Naive thymus-derived CD4-positive, alpha-beta T cell (primary cell): ENCODE measurements at regions of chr15 and their contacts with region 1.

Region 1: GRCh38 chr15:83011271-83012075 is at the start of gene C15orf40:
- DNase-seq: peak; percentile 71 to 90 (median 80)
- ATAC-seq: peak; percentile 92
- H3K4me3 ChIP-seq: peak within 1 kb of the TSS; percentile 91
- H3K4me3 Mint-ChIP-seq: peak within 1 kb of the TSS; percentile 91 to 100 (median 96)
- H3K27ac ChIP-seq: peak within 1 kb of the TSS; percentile 77
- H3K27ac Mint-ChIP-seq: peak within 1 kb of the TSS; percentile 88 to 98 (median 92)
- H3K4me1 ChIP-seq: peaks cover 14 to 24% of the 10 kb centered on the region in 2 donors
- H3K4me1 Mint-ChIP-seq: peaks cover 43 to 70% (median 55%) of the 10 kb centered on the region in 7 donors
- H3K27me3 ChIP-seq: no peaks in the 10 kb centered on the region
- H3K27me3 Mint-ChIP-seq: no peaks in the 10 kb centered on the region
- total RNA-seq, gene C15orf40: 12.1 to 47.2 (median 28.9) TPM

Region 2: DNA sequence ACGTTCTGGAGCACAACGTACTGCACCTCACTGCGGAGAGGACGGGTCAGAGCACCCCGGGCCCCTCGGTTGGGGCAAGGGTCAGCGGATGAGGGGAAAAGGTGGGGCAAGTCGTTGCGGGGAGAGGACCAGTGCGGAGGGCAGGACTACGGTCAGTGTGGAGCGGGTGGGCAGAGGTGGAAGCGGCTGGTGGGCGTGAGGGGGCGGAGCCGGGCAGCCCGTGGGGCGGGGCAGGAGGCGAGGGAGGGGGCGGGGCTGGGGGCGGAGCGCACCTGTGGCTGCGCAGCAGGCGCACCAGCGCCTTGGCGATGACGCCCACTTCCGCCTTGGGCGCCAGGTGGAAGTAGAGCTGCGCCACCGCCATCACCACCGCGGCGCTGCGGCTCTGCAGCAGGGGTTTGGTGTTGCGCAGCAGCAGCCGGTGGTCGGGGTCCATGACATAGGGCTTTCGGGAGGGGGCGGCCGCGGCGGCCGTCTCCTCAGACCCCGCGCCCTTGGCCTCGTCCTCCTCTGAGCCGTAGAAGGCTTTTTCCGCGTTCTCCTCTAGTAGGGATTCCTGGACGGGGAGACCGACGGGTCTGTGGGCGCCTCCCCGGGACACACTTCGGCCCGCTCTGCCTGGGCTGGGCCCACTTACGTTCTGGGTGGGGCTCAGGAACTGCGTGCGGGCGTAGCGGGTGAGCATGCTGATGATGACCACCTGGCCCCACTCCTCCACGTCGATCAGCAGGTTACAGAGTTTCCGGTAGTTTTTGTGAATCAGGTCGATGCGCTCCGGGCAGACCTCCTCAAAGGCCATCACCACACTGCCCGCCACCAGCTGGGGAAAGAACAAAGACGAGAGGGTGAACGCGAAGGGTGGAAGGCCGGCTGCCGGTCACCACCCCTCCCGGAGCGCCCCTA is 331.0 kb before region 1 on chr15:
- CTCF ChIA-PET with region 1: no interaction called
- POLR2A ChIA-PET with region 1: interaction called, 3 read pairs
- intact Hi-C with region 1: loop called in 1 of 2 experiments (anchors 5 kb)
- DNase-seq: peak; percentile 47 to 88 (median 82)
- ATAC-seq: peak; percentile 98
- H3K4me3 ChIP-seq: peak overlapping the region; percentile 97
- H3K4me3 Mint-ChIP-seq: peak overlapping the region; percentile 82 to 96 (median 93)
- H3K27ac ChIP-seq: peak overlapping the region; percentile 83
- H3K27ac Mint-ChIP-seq: peak overlapping the region in 8 of 9 donors; percentile 91 to 97 (median 94)
- H3K4me1 ChIP-seq: peaks cover 9% of the 10 kb centered on the region in 2 donors
- H3K4me1 Mint-ChIP-seq: peaks cover 0 to 19% (median 14%) of the 10 kb centered on the region in 7 donors
- H3K27me3 ChIP-seq: no peaks in the 10 kb centered on the region
- H3K27me3 Mint-ChIP-seq: peaks cover 0 to 42% (median 0%) of the 10 kb centered on the region in 5 donors

Region 3: DNA sequence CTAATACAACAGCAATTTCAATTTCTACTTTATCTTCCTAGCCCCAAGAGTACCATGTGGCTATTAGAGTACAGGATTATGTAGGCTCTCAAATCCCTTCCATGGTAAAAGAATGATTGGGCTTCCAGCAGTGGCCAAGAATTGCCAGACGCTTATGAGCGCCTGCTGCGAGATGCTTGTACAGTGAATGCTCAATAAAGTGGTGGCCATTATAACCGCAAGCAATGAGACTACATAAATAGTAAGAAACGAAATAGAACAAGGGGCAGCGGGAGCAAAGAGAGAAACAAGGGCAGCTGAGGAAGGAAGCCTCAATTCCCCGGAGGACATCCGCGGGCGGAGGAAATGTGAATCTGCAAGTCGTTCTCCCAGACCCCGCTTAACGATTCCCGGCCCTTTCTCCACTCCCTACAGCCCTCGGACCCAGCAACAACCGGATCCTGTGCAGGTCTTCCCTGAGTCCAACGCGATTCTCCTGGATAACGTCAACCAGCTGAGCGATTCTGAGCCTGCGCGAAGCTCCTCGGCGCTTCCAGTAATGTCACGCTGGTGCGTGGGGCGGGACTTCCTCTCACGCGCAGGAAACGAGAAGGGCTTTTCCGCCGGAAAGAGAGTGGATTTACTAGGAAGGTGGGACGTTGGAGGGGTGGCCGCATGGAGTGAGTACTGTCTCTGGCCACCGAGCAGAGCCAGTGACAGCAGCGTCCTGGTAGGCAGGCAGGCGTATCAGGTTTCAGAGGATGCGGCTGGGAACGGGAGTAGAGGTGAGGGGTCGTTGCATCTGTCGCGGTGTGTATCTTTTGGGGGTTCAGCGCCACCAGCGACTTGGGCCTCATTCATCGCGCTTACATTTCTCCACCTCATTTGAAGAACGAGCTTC is 261.3 kb before region 1 on chr15:
- CTCF ChIA-PET with region 1: no interaction called
- POLR2A ChIA-PET with region 1: interaction called, 3 read pairs
- intact Hi-C with region 1: loop called in 1 of 2 experiments (anchors 2 kb)
- DNase-seq: peak; percentile 51 to 84 (median 70)
- ATAC-seq: peak; percentile 96
- H3K4me3 ChIP-seq: peak overlapping the region; percentile 88
- H3K4me3 Mint-ChIP-seq: peak overlapping the region; percentile 93 to 100 (median 98)
- H3K27ac ChIP-seq: peak overlapping the region; percentile 78
- H3K27ac Mint-ChIP-seq: peak overlapping the region; percentile 89 to 98 (median 95)
- H3K4me1 ChIP-seq: peaks cover 10 to 15% of the 10 kb centered on the region in 2 donors
- H3K4me1 Mint-ChIP-seq: peaks cover 26 to 69% (median 57%) of the 10 kb centered on the region in 7 donors
- H3K27me3 ChIP-seq: no peaks in the 10 kb centered on the region
- H3K27me3 Mint-ChIP-seq: no peaks in the 10 kb centered on the region

Region 4: DNA sequence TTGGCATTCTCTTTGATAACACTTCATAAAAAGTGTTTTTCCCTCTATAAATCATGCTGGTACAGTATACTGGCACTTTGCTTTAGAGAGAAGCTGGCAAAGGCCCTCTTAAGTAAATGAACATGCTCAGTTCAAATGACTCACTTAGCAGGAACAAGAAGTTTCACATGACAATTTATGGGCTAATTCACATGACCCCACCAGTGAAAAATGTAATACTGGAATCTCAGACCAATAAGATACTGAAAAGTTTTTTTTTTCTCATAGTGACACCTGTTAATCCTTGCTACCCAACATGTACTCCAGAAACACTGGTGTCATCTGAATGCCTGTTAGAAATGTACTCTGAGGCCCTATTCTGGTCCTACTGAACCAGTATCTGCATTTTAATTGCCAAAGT is 41.7 kb after region 1 on chr15:
- CTCF ChIA-PET with region 1: no interaction called
- POLR2A ChIA-PET with region 1: no interaction called
- intact Hi-C with region 1: no loop called
- DNase-seq: no peak
- ATAC-seq: peak; percentile 26
- H3K4me3 ChIP-seq: no peak overlapping the region
- H3K4me3 Mint-ChIP-seq: no peak overlapping the region
- H3K27ac ChIP-seq: no peak overlapping the region
- H3K27ac Mint-ChIP-seq: no peak overlapping the region
- H3K4me1 ChIP-seq: peaks cover 0 to 8% of the 10 kb centered on the region in 2 donors
- H3K4me1 Mint-ChIP-seq: peaks cover 9 to 28% (median 21%) of the 10 kb centered on the region in 7 donors
- H3K27me3 ChIP-seq: no peaks in the 10 kb centered on the region
- H3K27me3 Mint-ChIP-seq: no peaks in the 10 kb centered on the region

Region 5: DNA sequence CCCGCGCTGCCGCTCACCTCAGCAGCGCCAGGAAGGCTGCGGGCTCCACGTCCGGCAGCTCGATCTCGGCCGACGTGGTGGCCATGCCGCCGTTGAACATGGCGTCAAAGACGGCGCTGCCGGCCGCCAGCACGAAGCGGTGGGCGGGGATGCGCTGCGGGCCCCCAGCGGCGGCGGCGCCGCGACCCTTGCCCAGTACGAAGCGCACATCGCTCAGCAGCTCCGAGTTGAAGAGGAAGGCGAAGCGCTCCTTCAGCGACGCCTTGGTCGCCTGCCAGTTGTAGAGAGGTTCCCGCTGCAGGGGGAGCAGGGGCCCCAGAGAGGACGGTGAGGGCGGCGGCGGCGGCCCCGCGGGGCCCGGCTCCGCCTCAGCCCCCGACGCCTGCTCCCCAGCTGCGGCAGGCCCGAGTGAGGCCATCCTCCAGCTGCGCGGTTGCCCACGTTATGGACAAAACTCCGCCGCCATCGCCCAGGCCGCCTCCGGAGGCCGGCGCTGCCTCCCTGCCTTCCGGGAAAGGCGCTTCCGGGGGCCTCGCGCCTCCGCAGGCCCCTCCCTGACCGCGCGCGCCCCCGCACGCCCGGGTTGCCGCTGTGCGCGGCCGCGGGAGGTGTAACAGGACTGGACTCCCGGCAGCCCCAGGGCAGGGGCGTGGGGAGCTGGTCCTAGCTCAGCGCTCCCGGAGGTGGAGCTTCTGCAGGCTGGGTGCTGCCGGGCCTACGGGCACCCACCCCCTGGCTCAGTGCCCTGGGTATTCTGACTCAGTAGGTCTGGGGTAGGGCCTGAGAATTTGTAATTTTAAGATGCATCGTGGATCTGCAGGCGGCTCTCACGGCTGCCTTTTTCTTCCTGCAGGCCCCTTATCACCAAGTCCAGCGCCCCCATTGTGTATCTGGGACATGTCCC is 55.5 kb after region 1 on chr15 and contains the start of gene BTBD1:
- CTCF ChIA-PET with region 1: no interaction called
- POLR2A ChIA-PET with region 1: interaction called, 11 read pairs
- intact Hi-C with region 1: loop called (anchors 1 kb)
- DNase-seq: peak; percentile 67 to 93 (median 76)
- ATAC-seq: peak; percentile 88
- H3K4me3 ChIP-seq: peak within 1 kb of the TSS; percentile 87
- H3K4me3 Mint-ChIP-seq: peak within 1 kb of the TSS in 7 of 10 donors; percentile 67 to 89 (median 83)
- H3K27ac ChIP-seq: peak within 1 kb of the TSS; percentile 84
- H3K27ac Mint-ChIP-seq: peak within 1 kb of the TSS; percentile 60 to 91 (median 87)
- H3K4me1 ChIP-seq: peaks cover 32 to 35% of the 10 kb centered on the region in 2 donors
- H3K4me1 Mint-ChIP-seq: peaks cover 8 to 18% (median 11%) of the 10 kb centered on the region in 7 donors
- H3K27me3 ChIP-seq: no peaks in the 10 kb centered on the region
- H3K27me3 Mint-ChIP-seq: peaks cover 0 to 1% (median 0%) of the 10 kb centered on the region in 5 donors
- total RNA-seq, gene BTBD1: 35.0 to 57.6 (median 36.4) TPM

Region 6: DNA sequence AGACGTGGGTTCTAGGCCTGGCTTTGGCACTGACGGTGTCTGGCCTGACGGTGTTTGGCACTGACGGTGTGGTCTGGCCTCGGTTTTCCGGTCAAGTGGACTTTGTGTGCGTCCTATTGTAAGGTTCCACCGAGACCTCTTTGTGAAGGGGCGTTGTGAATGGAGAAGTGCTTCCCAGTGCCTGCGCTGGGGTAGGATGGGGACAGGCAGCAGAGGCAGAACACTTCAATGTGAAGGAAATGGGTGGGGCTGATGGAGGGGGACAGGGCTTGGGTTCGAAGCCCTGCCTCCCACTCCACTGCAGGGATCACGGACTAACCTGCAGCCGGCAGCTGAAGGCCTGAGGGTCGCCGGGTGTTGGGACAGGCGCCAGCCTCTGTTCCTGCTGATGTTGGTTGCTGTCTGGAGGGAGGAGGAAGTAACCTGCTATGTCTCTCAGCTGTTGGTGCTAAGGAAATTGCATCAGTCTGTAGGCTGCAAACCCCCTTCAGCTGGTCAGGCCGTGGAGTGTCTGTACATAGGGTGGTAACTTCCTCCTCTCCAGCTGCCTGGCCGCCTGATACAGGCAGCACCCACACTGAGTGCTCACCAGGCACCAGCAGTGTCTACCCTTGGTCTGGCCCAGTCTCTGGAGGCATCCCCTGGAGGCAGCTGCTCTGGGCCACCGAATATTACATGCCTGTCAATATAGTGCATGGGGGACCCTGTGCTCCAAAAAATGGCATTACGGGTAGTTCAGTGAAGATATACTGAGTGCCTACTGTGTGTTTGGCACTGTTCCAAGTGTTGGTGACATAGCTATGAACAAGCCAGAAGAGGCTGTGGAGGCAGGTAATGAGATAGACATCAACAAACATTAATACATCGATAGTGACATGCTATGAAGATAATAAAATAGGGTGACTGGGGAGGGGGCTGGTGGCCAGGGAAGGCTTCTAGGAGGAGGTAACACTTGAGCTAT is 97.1 kb after region 1 on chr15:
- CTCF ChIA-PET with region 1: no interaction called
- POLR2A ChIA-PET with region 1: no interaction called
- intact Hi-C with region 1: loop called in 1 of 2 experiments (anchors 1 kb)
- DNase-seq: peak in 3 of 9 donors; percentile 15 to 30 (median 19)
- ATAC-seq: peak; percentile 89
- H3K4me3 ChIP-seq: peak overlapping the region; percentile 22
- H3K4me3 Mint-ChIP-seq: peak overlapping the region; percentile 68 to 97 (median 76)
- H3K27ac ChIP-seq: no peak overlapping the region
- H3K27ac Mint-ChIP-seq: peak overlapping the region in 1 of 9 donors; percentile 90
- H3K4me1 ChIP-seq: peaks cover 0 to 10% of the 10 kb centered on the region in 2 donors
- H3K4me1 Mint-ChIP-seq: peaks cover 11 to 38% (median 17%) of the 10 kb centered on the region in 7 donors
- H3K27me3 ChIP-seq: no peaks in the 10 kb centered on the region
- H3K27me3 Mint-ChIP-seq: peaks cover 21 to 59% (median 53%) of the 10 kb centered on the region in 5 donors

Region 7: GRCh38 chr15:83164111-83164770 is 152.8 kb after region 1 on chr15:
- CTCF ChIA-PET with region 1: no interaction called
- POLR2A ChIA-PET with region 1: no interaction called
- intact Hi-C with region 1: loop called in 1 of 2 experiments (anchors 1 kb)
- DNase-seq: no peak
- ATAC-seq: no peak
- H3K4me3 ChIP-seq: no peak overlapping the region
- H3K4me3 Mint-ChIP-seq: peak overlapping the region in 4 of 10 donors; percentile 35 to 85 (median 61)
- H3K27ac ChIP-seq: peak overlapping the region; percentile 26
- H3K27ac Mint-ChIP-seq: peak overlapping the region in 7 of 9 donors; percentile 22 to 97 (median 79)
- H3K4me1 ChIP-seq: no peaks in the 10 kb centered on the region
- H3K4me1 Mint-ChIP-seq: peaks cover 5 to 36% (median 21%) of the 10 kb centered on the region in 7 donors
- H3K27me3 ChIP-seq: no peaks in the 10 kb centered on the region
- H3K27me3 Mint-ChIP-seq: peaks cover 0 to 49% (median 18%) of the 10 kb centered on the region in 5 donors

Region 8: DNA sequence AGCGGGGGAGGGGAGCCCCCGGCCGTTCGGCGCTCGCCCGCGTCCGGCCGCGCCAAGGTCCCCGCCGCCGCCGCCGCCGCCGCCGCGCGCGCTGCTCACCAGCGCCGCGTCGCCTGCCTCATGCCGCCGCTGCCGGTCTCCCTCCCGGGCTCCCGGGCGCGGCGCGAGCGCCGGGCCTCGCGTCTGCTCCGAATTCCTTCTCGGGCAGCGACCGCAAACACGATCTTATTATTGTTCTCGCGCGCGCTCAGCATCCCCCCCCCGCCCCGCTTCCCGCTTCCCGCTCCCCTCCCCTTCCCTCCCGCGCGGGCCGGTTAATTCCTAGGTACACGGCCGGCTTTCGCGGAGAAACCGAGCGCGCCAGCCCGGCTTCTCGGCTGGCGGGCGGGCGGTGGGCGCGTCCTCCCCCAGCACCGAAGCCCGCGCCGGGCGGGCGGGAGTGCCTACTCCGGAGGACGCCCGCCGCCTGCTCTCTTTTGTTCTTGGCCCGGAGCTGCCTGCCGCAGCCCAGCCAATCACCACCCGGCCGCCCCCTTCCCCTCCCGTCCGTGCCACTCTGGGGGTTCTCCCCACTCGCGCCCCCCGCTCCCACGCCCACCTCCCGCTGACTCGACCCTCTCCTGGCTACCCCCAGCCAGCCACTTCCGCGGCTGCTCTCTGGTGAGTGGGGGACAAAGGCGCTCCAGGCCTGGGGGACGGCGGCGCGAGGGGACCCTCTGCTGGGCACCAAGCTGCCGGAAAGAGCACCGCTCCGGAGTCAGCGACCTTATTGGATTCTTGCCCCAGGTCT is 196.3 kb after region 1 on chr15 and contains the start of gene HDGFL3:
- CTCF ChIA-PET with region 1: no interaction called
- POLR2A ChIA-PET with region 1: no interaction called
- intact Hi-C with region 1: loop called in 1 of 2 experiments (anchors 1 kb)
- DNase-seq: peak in 6 of 9 donors; percentile 5 to 53 (median 24)
- ATAC-seq: peak; percentile 55
- H3K4me3 ChIP-seq: no peak within 1 kb of the TSS
- H3K4me3 Mint-ChIP-seq: peak within 1 kb of the TSS; percentile 85 to 97 (median 93)
- H3K27ac ChIP-seq: peak within 1 kb of the TSS; percentile 51
- H3K27ac Mint-ChIP-seq: peak within 1 kb of the TSS in 5 of 9 donors; percentile 78 to 86 (median 85)
- H3K4me1 ChIP-seq: peaks cover 0 to 3% of the 10 kb centered on the region in 2 donors
- H3K4me1 Mint-ChIP-seq: peaks cover 0 to 18% (median 7%) of the 10 kb centered on the region in 7 donors
- H3K27me3 ChIP-seq: peaks cover 3% of the 10 kb centered on the region in 2 donors
- H3K27me3 Mint-ChIP-seq: peaks cover 14 to 37% (median 19%) of the 10 kb centered on the region in 5 donors
- total RNA-seq, gene HDGFL3: 2.1 to 50.1 (median 3.6) TPM